ENCODE measurements at regions of chr9 and their contacts with region 1.

Region 1: GRCh38 chr9:133485361-133486260 is 6.7 kb upstream of the SLC2A6 start:
- DNase-seq: no peak
- H3K4me3 ChIP-seq: no peak overlapping the region
- H3K27ac ChIP-seq: no peak overlapping the region
- H3K4me1 ChIP-seq: peaks cover 0 to 5% (median 2%) of the 10 kb centered on the region in 4 donors
- H3K27me3 ChIP-seq: peaks cover 21% of the 10 kb centered on the region
- CTCF ChIP-seq: no peak
- EP300 ChIP-seq: no peak
- POLR2A ChIP-seq: no peak

Region 2: GRCh38 chr9:133406480-133407307 is 78.9 kb before region 1 on chr9:
- in situ Hi-C with region 1: loop called in 3 of 4 experiments (anchors 5 to 10 kb)
- intact Hi-C with region 1: loop called (anchors 2 kb)
- DNase-seq: peak; percentile 82
- H3K4me3 ChIP-seq: no peak overlapping the region
- H3K27ac ChIP-seq: no peak overlapping the region
- H3K4me1 ChIP-seq: no peaks in the 10 kb centered on the region
- H3K27me3 ChIP-seq: no peaks in the 10 kb centered on the region
- CTCF ChIP-seq: peak; percentile 88 to 93 (median 92)
- EP300 ChIP-seq: no peak
- POLR2A ChIP-seq: no peak

Measured in transverse colon (tissue), 4 donors.